ENCODE measurements at regions of chr5 and their contacts with region 1.

Region 1: GRCh38 chr5:100903039-100903887 is at the start of gene ST8SIA4:
- DNase-seq: peak; percentile 96
- total RNA-seq, gene ST8SIA4: 4.6 TPM

Region 2: GRCh38 chr5:99694884-99695283 is 1208.4 kb before region 1 on chr5:
- intact Hi-C with region 1: no loop called
- DNase-seq: no peak

Region 3: GRCh38 chr5:100535060-100536005 is 367.9 kb before region 1 on chr5 and contains the start of gene FAM174A:
- intact Hi-C with region 1: loop called (anchors 5 kb)
- DNase-seq: peak; percentile 99
- total RNA-seq, gene FAM174A: 18.6 TPM

Region 4: GRCh38 chr5:100777680-100778281 is 125.5 kb before region 1 on chr5:
- intact Hi-C with region 1: loop called (anchors 5 kb)
- DNase-seq: no peak

Region 5: DNA sequence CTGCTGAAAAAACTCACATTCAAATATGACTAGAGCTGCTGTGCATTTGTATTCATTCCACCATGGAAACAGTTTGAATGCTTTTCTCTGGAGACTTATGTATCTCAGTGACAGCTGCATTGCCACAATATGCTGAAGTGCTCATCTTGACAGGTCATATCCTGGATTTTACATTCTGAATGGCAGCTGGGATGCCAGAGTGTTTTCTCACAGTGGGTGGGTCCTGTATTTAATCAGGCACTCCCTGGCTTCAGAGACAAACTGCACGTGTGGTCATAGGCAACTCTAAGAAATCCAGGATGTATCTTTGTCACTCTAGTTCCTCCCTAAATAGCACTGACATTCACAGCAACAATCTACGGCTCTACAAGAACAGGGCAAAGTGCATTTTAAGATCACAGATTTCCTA is 75.8 kb before region 1 on chr5:
- intact Hi-C with region 1: loop called (anchors 5 kb)
- DNase-seq: no peak

Region 6: DNA sequence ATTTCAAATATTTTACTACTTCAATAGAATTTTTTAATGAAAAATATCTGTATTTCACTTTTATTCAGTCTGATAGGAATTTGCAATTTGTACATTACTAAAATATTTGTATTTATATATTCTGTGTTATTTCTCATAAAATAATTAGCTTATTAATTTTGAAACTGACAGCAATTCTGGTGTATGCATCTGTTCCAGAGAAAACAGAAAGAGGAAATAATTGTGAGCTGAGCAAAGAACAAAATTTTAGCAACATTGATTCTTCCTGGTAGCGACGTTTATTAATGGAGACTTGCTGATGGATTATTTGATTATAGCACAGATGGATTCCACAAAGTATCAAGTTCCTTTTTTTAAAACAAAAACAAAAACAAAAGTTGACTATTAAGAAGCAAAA is 61.2 kb before region 1 on chr5:
- intact Hi-C with region 1: no loop called
- DNase-seq: no peak

Region 7: GRCh38 chr5:100852988-100853449 is 50.2 kb before region 1 on chr5:
- intact Hi-C with region 1: loop called (anchors 5 kb)
- DNase-seq: no peak

Region 8: DNA sequence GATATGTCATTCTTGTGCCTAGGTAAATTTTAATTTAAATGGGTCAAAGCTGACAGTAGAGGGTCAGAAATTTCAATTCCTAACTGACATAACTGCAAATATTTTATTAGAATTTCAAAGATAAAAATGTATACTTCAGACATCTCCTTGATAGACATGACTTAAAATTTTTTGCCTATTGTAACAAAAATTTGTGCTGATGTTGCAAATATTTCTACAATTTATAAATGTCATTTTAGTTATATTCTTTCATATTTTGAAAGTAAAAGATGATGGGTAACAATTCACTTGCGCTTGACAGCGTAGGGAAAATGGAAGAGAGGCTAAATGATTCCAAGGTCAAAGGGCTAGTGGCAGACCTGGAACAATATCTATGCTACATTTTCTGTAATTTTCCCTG is 220.1 kb after region 1 on chr5:
- intact Hi-C with region 1: no loop called
- DNase-seq: no peak

Region 9: GRCh38 chr5:102114525-102115069 is 1211.3 kb after region 1 on chr5:
- intact Hi-C with region 1: no loop called
- DNase-seq: no peak

Measured in cardiac septum (tissue), 1 donor.